HepG2 (cell line): ENCODE measurements at regions of chr17 and their contacts with region 1.

Region 1: DNA sequence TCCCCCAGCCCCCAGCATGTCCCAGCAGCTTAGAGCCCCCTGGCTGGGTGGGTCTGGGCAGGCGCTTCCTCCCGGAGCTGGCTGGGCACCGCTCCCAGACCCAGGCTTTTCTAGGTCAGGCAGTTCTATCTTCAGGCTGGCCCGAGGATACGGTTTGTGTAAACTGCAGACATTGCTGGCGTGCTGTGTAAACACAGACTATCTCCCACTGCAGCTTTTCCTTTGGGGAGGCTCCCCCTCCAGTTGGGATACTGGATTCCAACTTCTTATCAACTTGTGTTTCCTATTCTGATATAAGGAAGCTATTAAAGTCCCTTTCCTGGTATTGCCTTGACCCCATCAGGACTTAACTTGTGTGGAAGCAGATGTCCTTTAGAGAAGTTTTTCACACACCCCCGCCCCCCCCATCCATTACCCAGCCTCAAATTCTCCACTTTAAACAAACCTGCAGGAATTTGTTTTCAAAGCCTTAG is 18.3 kb upstream of the GNA13 start:
- DNase-seq: peak; percentile 60
- ATAC-seq: peak; percentile 74
- H3K4me3 ChIP-seq: peak overlapping the region; percentile 4 to 24 (median 11); a peak in 4 of 6 replicates
- H3K27ac ChIP-seq: no peak overlapping the region
- H3K4me1 ChIP-seq: peaks cover 37% of the 10 kb centered on the region
- H3K27me3 ChIP-seq: no peaks in the 10 kb centered on the region
- CTCF ChIP-seq: peak; percentile 34; the same call in 1 of the 2 replicates
- EP300 ChIP-seq: 0 out of 4 replicates have a peak, but pooled peaks of 1 of the 2 experiments have one; percentile 15
- POLR2A ChIP-seq: no peak
- RAD21 ChIP-seq: no peak

Region 2: GRCh38 chr17:65013613-65014391 is 61.0 kb before region 1 on chr17:
- CTCF ChIA-PET with region 1: no interaction called
- POLR2A ChIA-PET with region 1: no interaction called
- in situ Hi-C with region 1: no loop called
- intact Hi-C with region 1: no loop called
- DNase-seq: peak; percentile 28
- ATAC-seq: no peak
- H3K4me3 ChIP-seq: no peak overlapping the region
- H3K27ac ChIP-seq: no peak overlapping the region
- H3K4me1 ChIP-seq: peaks cover 38% of the 10 kb centered on the region
- H3K27me3 ChIP-seq: no peaks in the 10 kb centered on the region
- CTCF ChIP-seq: no peak
- EP300 ChIP-seq: no peak
- POLR2A ChIP-seq: no peak
- RAD21 ChIP-seq: no peak

Region 3: DNA sequence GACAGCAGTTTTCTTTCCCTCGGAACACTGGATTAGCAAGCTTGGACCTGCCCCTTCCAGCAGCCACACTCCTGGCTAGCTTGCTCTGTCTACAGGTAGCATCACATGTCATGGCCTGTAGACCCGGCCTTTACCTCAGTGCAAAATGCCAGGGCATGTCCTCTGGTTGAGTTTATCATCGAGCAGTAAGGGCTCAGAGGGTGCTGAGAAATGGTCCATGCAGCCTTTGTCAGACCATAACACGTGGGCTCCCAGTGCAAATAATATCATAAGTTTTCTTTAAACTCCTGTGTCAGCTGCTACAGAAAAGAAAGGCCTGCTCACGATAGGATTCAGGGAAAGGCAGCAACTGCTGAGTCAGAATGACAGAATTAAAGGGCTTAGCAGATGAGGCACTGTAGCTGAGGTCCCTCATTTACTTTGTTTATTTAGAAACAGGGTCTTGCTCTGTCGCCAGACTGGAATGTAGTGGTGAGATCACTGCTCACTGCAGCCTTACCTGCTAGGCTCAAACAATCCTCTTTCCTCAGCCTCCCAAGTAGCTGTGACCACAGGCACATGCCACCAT is 10.3 kb before region 1 on chr17:
- CTCF ChIA-PET with region 1: no interaction called
- POLR2A ChIA-PET with region 1: interaction called, 11 read pairs
- in situ Hi-C with region 1: no loop called
- intact Hi-C with region 1: no loop called
- DNase-seq: peak; percentile 88
- ATAC-seq: peak; percentile 80
- H3K4me3 ChIP-seq: peak overlapping the region in 1 of 3 experiments; percentile 27; a peak in 2 of 6 replicates
- H3K27ac ChIP-seq: peak overlapping the region; percentile 28
- H3K4me1 ChIP-seq: peaks cover 40% of the 10 kb centered on the region
- H3K27me3 ChIP-seq: no peaks in the 10 kb centered on the region
- CTCF ChIP-seq: peak; percentile 6; the same call in 1 of the 2 replicates
- EP300 ChIP-seq: peak in 1 of 2 experiments; percentile 23; a peak in 1 of 4 replicates
- POLR2A ChIP-seq: no peak
- RAD21 ChIP-seq: no peak